AG04449 (cell line): ENCODE measurements at regions of chr19 and their contacts with region 1.

Region 1: DNA sequence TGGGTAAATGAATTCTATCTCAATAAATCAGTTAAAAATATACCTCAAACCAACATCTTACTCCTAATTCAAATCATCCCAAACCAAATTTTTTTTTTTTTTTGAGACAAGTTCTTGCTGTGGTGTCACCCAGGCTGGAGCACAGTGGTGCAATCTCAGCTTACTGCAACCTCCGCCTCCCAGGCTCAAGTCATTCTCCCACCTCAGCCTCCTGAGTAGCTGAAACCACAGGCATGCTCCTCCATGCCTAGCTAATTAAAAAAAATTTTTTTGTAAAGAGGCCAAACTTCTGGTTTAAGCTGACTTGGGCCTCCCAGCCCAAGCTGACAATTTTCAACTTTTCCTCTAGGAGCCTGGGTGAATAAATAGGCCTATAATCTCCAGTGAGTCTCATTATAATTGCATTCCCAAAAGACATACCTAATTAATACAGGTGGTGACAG is 22.1 kb upstream of the OLFM2 start:
- DNase-seq: peak; percentile 84
- H3K4me3 ChIP-seq: no peak overlapping the region
- CTCF ChIP-seq: no peak

Region 2: DNA sequence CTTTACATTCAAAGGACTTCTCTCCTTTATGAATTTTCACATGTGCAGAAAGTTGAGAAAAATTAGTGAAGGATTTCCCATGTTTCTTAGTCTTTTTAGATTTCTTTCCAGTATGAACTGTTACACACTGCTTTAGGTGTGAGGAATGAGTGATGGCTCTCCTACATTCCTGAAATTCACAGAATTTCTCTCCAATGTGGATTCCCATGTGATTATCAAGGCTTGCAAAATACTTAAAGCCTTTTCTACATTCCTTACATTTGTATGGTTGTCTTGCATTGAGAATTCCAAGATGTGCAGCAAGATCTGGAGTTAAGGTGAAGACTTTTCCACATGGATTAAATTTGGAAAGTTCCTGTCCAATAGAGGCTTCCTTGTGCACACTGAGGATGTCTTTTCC is 267.7 kb before region 1 on chr19:
- CTCF ChIA-PET with region 1: no interaction called
- POLR2A ChIA-PET with region 1: no interaction called
- DNase-seq: no peak
- H3K4me3 ChIP-seq: no peak overlapping the region
- CTCF ChIP-seq: no peak

Region 3: DNA sequence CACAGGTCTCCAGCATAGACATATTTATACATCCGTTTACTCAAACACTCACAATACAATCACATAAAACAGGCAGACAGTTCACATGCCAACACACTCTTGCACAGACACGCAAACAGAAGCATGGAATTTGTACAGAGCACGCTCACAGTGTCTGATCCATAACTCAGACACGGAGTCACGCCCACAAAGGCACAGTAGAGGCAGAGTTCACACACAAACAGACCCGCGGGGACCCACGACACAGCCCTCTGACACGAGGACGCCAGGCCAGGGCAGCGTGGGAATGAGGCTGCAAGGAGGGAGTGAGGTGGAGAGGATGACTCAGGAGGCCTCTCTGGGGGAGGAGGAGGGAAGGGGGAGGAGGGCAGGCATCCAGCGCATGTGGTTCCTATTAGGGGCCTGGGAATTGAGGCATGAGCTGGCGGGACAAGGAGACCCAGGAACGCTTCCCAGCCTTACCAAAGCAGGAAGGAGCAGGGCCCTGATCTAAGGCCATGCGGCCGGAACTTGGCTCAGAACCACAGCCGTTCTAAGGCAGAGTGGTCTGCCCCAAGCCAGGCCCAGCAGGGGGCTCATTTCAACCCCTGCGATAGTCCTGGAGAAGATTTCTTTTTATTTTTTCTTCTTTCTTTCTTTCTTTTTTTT is 13.0 kb before region 1 on chr19:
- CTCF ChIA-PET with region 1: interaction called, 10 read pairs
- POLR2A ChIA-PET with region 1: interaction called, 12 read pairs
- DNase-seq: peak; percentile 98
- H3K4me3 ChIP-seq: peak overlapping the region; percentile 21; the same call in 1 of the 2 replicates
- CTCF ChIP-seq: peak; percentile 25